Right lobe of liver (tissue), 6 donors: ENCODE measurements at regions of chrX and their contacts with region 1.

Region 1: DNA sequence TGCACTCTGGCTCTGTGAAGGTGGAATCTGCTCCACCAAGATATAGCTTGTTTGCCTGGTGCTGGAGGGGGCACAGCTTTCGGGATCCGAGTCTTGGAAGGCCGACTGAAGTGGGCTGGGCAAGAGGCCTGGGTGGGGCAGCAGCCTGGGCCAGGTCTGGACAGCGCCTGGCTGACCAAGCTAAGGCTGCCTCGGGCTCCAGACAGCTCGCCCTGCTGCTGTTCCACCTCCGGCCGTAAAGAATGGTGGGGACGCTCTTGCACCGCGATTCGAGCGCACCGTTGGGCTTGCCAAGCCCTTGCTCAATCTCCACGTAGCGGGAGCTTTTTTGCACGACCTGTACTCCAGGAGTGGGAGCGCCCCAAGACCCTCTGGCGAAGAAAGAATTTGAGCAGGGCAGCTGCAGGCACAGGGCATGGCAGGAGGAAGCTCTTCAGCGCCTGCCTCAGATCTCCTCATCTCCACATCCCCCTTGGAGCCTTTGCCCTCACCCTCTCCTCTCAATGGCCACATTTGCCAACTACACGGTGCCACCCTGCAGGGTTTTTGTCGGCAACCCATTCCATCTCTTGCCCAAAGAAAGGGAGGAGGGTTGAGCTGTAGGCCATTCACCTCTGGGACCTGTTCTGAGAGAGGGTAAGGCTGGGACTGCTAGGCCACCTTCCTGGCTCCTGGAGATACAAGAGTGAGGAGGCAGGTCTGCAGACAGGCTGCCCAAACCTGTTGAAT is 18.9 kb downstream of the CNGA2 start:
- DNase-seq: peak; percentile 68 to 81 (median 71)
- ATAC-seq: peak; percentile 94 to 98 (median 97)
- H3K4me3 ChIP-seq: no peak overlapping the region
- H3K27ac ChIP-seq: no peak overlapping the region
- H3K4me1 ChIP-seq: peaks cover 0 to 5% (median 0%) of the 10 kb centered on the region in 4 donors
- H3K27me3 ChIP-seq: peaks cover 0 to 8% of the 10 kb centered on the region in 2 donors
- CTCF ChIP-seq: peak; percentile 72 to 85 (median 79)
- POLR2A ChIP-seq: no peak

Region 2: DNA sequence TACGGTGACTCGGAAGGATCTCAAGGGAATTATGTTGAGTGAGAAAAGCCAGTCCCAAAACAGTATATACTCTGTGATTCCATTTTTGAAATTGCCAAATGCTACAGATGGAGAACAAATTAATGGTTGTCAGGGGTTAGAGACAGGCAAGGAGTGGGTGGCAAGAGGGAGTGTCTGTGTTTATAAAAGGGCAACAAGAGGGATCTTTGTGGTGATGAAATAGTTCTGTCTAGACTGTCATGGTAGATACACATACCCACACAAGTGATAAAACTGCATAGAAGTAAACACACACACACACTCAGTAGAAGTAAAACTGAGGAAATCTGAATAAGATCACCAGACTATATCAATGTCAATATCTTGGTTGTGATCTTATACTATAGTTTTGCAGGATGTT is 947.7 kb before region 1 on chrX:
- intact Hi-C with region 1: no loop called
- DNase-seq: no peak
- ATAC-seq: peak in 1 of 4 donors; percentile 33
- H3K4me3 ChIP-seq: no peak overlapping the region
- H3K27ac ChIP-seq: no peak overlapping the region
- H3K4me1 ChIP-seq: no peaks in the 10 kb centered on the region
- H3K27me3 ChIP-seq: no peaks in the 10 kb centered on the region
- CTCF ChIP-seq: no peak
- POLR2A ChIP-seq: no peak

Region 3: GRCh38 chrX:152135426-152135825 is 381.9 kb after region 1 on chrX:
- intact Hi-C with region 1: no loop called
- DNase-seq: no peak
- ATAC-seq: peak in 1 of 4 donors; percentile 11
- H3K4me3 ChIP-seq: no peak overlapping the region
- H3K27ac ChIP-seq: no peak overlapping the region
- H3K4me1 ChIP-seq: no peaks in the 10 kb centered on the region
- H3K27me3 ChIP-seq: no peaks in the 10 kb centered on the region
- CTCF ChIP-seq: no peak
- POLR2A ChIP-seq: no peak

Region 4: GRCh38 chrX:152632445-152633097 is 879.1 kb after region 1 on chrX:
- intact Hi-C with region 1: loop called (anchors 10 kb)
- DNase-seq: peak in 2 of 3 donors; percentile 47 to 50
- ATAC-seq: peak; percentile 68 to 84 (median 80)
- H3K4me3 ChIP-seq: no peak overlapping the region
- H3K27ac ChIP-seq: no peak overlapping the region
- H3K4me1 ChIP-seq: no peaks in the 10 kb centered on the region
- H3K27me3 ChIP-seq: peaks cover 0 to 5% of the 10 kb centered on the region in 2 donors
- CTCF ChIP-seq: peak; percentile 76 to 86 (median 83)
- POLR2A ChIP-seq: no peak